ENCODE measurements at regions of chr5 and their contacts with region 1.

Region 1: DNA sequence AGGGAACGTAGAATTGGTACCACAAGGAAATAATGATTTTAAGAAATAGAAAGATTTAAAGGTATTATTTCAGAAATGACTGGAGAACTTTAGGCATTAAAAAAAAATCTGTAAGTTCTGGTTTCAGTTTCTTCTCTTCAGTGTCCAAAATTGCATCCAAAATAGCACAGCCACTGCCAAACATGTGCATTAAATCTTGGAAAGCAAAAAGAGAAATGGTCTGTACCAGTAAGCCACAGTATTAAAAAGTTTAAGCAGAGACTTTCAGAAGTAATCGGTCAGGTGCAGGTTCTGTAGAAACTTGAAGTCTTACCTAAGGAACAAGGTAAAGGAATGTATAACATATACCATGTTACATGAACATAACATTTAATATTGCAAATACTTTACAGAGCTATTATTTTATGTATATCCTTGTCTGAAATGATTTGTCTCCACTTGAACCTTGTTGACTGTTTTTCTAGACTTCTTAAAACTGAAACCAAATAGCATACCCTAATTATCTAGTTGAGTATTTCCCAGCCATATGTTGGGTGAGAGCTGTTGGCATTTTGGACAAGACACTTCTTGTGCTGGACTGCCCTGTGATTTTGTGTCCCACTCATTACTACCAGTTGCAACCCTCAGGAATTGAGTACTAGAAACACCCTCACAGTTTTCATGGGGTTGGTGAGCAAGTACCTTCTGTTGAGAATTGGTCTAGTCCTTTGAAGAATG is 32.1 kb downstream of the NIPBL start:
- DNase-seq: no peak
- ATAC-seq: no peak
- H3K4me3 Mint-ChIP-seq: no peak overlapping the region
- H3K27ac Mint-ChIP-seq: no peak overlapping the region
- H3K4me1 Mint-ChIP-seq: peaks cover 47% of the 10 kb centered on the region
- H3K27me3 Mint-ChIP-seq: no peaks in the 10 kb centered on the region

Region 2: GRCh38 chr5:36928947-36929346 is 20.2 kb after region 1 on chr5:
- CTCF ChIA-PET with region 1: interaction called, 3 read pairs
- POLR2A ChIA-PET with region 1: no interaction called
- intact Hi-C with region 1: loop called in 1 of 2 experiments (anchors 2 kb)
- DNase-seq: no peak
- ATAC-seq: peak; percentile 78
- H3K4me3 Mint-ChIP-seq: no peak overlapping the region
- H3K27ac Mint-ChIP-seq: no peak overlapping the region
- H3K4me1 Mint-ChIP-seq: peaks cover 66% of the 10 kb centered on the region
- H3K27me3 Mint-ChIP-seq: no peaks in the 10 kb centered on the region

Measured in activated CD4-positive, alpha-beta T cell treated with anti-CD3 and anti-CD28 coated beads for 36 hours (primary cell).